ENCODE measurements at regions of chr1 and their contacts with region 1.

Region 1: DNA sequence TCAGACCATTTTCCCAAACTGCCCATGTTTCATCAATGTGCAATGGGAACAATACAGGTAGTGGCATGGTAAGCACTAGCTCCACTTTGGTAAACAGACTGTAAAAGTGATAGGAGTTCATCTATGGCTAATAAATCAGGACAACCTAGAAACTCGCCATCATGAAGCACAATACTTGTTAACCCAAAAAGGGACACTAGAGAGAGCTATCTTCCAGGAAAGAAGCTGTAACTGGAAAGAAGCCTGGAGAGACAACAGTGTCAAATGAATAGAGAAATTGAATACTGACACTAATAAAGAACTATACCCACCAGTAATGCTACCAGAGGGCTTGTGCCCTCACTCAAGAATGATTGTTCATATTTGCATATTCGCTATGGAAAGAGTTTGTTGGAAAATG is 164.7 kb upstream of the RGS18 start:
- DNase-seq: peak; percentile 6
- H3K4me3 ChIP-seq: no peak overlapping the region
- H3K27ac ChIP-seq: no peak overlapping the region
- H3K4me1 ChIP-seq: no peaks in the 10 kb centered on the region
- H3K27me3 ChIP-seq: no peaks in the 10 kb centered on the region
- CTCF ChIP-seq: peak in 1 of 2 donors; percentile 45

Region 2: GRCh38 chr1:191905781-191906180 is 87.8 kb before region 1 on chr1:
- CTCF ChIA-PET with region 1: no interaction called
- dilution Hi-C with region 1: no loop called
- in situ Hi-C with region 1: no loop called
- intact Hi-C with region 1: no loop called
- DNase-seq: no peak
- H3K4me3 ChIP-seq: no peak overlapping the region
- H3K27ac ChIP-seq: no peak overlapping the region
- H3K4me1 ChIP-seq: peaks cover 6% of the 10 kb centered on the region
- H3K27me3 ChIP-seq: no peaks in the 10 kb centered on the region
- CTCF ChIP-seq: no peak

Region 3: DNA sequence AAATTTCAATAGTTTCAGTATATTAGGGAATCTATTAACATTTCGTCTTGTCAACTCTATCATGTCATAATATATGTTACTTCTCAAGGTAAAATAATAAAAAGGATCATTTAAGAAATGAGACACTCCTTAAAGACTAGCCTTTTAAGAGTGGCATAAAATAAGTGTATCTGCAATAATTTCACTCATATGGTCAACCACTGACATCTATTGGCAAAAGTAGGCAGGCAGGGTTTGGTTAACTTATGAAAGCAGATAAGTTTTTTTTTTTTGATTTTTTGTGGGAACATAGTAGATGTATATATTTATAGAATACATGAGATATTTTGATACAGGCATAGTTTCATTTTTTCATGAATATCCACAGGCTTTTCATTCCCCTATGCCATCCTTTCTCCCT is 317.7 kb after region 1 on chr1:
- CTCF ChIA-PET with region 1: no interaction called
- dilution Hi-C with region 1: no loop called
- in situ Hi-C with region 1: no loop called
- intact Hi-C with region 1: loop called (anchors 5 kb)
- DNase-seq: peak; percentile 10
- H3K4me3 ChIP-seq: no peak overlapping the region
- H3K27ac ChIP-seq: no peak overlapping the region
- H3K4me1 ChIP-seq: no peaks in the 10 kb centered on the region
- H3K27me3 ChIP-seq: no peaks in the 10 kb centered on the region
- CTCF ChIP-seq: peak; percentile 49 to 62

Region 4: GRCh38 chr1:192445848-192446489 is 452.4 kb after region 1 on chr1:
- CTCF ChIA-PET with region 1: no interaction called
- dilution Hi-C with region 1: no loop called
- in situ Hi-C with region 1: no loop called
- intact Hi-C with region 1: loop called (anchors 2 kb)
- DNase-seq: peak; percentile 4
- H3K4me3 ChIP-seq: no peak overlapping the region
- H3K27ac ChIP-seq: no peak overlapping the region
- H3K4me1 ChIP-seq: peaks cover 18% of the 10 kb centered on the region
- H3K27me3 ChIP-seq: no peaks in the 10 kb centered on the region
- CTCF ChIP-seq: peak; percentile 62 to 76

Measured in mammary epithelial cell (primary cell).